ENCODE measurements at regions of chr21 and their contacts with region 1.

Region 1: DNA sequence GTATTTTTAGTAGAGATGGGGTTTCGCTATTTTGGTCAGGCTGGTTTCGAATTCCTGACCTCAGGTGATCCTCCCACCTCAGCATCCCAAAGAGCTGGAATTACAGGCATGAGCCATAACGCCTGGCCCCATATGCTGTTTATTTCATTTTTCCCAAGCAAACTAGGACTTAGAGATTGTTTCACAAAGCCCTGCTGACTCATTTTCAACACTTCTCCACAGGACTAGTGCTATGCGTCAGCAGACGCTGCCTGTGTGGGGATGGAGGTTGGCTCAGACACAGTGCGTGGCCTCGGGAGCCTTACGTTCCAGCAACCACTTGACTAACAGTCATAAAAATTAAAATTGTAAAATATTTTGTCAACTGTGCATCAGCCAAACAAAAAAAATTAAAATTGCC is 22.7 kb downstream of the PKNOX1 start:
- DNase-seq: no peak
- H3K4me3 Mint-ChIP-seq: no peak overlapping the region
- H3K27ac Mint-ChIP-seq: no peak overlapping the region
- H3K4me1 Mint-ChIP-seq: no peaks in the 10 kb centered on the region
- H3K27me3 Mint-ChIP-seq: no peaks in the 10 kb centered on the region

Region 2: GRCh38 chr21:42918291-42918690 is 78.8 kb before region 1 on chr21:
- CTCF ChIA-PET with region 1: interaction called, 3 read pairs
- intact Hi-C with region 1: loop called (anchors 5 kb)
- DNase-seq: no peak
- H3K4me3 Mint-ChIP-seq: no peak overlapping the region
- H3K27ac Mint-ChIP-seq: no peak overlapping the region
- H3K4me1 Mint-ChIP-seq: no peaks in the 10 kb centered on the region
- H3K27me3 Mint-ChIP-seq: no peaks in the 10 kb centered on the region

Region 3: GRCh38 chr21:42939582-42940410 is 57.3 kb before region 1 on chr21:
- CTCF ChIA-PET with region 1: no interaction called
- intact Hi-C with region 1: no loop called
- DNase-seq: no peak
- H3K4me3 Mint-ChIP-seq: no peak overlapping the region
- H3K27ac Mint-ChIP-seq: no peak overlapping the region
- H3K4me1 Mint-ChIP-seq: no peaks in the 10 kb centered on the region
- H3K27me3 Mint-ChIP-seq: no peaks in the 10 kb centered on the region

Region 4: DNA sequence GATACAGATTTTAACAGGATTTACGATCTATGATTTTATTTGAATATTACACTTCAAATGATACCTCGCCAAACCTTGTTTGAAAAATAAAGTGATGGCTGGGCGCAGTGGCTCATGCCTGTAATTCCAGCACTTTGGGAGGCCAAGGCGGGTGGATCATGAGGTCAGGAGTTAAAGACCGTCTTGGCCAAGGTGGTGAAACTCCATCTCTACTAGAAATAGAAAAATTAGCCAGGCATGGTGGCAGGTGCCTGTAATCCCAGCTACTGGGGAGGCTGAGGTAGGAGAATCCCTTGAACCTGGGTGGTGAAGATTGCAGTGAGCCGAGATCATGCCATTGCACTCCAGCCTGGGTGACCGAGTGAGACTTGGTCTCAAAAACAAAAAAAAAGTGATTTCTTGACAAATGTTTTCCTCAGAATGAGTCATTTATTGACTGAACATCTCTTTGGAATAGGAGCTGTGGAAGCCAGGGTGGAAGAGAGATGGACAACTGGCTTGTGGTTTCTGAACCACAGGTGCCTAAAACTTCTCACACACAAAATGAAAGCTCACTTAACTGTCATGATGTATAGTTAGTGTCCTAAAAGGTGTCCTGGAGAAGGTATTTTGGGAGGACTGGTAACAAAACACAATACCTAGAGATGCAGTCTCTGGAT is 10.8 kb before region 1 on chr21:
- CTCF ChIA-PET with region 1: no interaction called
- intact Hi-C with region 1: loop called (anchors 1 kb)
- DNase-seq: no peak
- H3K4me3 Mint-ChIP-seq: no peak overlapping the region
- H3K27ac Mint-ChIP-seq: no peak overlapping the region
- H3K4me1 Mint-ChIP-seq: peaks cover 24% of the 10 kb centered on the region
- H3K27me3 Mint-ChIP-seq: no peaks in the 10 kb centered on the region

Region 5: GRCh38 chr21:43659136-43660000 is 662.3 kb after region 1 on chr21 and contains the starts of genes HSF2BP and RRP1B:
- CTCF ChIA-PET with region 1: no interaction called
- intact Hi-C with region 1: no loop called
- DNase-seq: peak; percentile 79
- H3K4me3 Mint-ChIP-seq: peak within 1 kb of the TSS; percentile 98
- H3K27ac Mint-ChIP-seq: peak within 1 kb of the TSS; percentile 96
- H3K4me1 Mint-ChIP-seq: peaks cover 44% of the 10 kb centered on the region
- H3K27me3 Mint-ChIP-seq: no peaks in the 10 kb centered on the region
- total RNA-seq, gene HSF2BP: 1.3 to 2.1 TPM
- total RNA-seq, gene RRP1B: 59.6 to 60.6 TPM